Mammary epithelial cell (primary cell): ENCODE measurements at regions of chr14 and their contacts with region 1.

Region 1: GRCh38 chr14:72904840-72905561 is 11.1 kb upstream of the DPF3 start:
- DNase-seq: peak; percentile 66
- H3K4me3 ChIP-seq: no peak overlapping the region
- H3K27ac ChIP-seq: no peak overlapping the region
- H3K4me1 ChIP-seq: peaks cover 27% of the 10 kb centered on the region
- H3K27me3 ChIP-seq: no peaks in the 10 kb centered on the region
- CTCF ChIP-seq: peak; percentile 94 to 97

Region 2: GRCh38 chr14:72528059-72528862 is 376.7 kb before region 1 on chr14:
- CTCF ChIA-PET with region 1: interaction called, 12 read pairs
- dilution Hi-C with region 1: no loop called
- in situ Hi-C with region 1: no loop called
- intact Hi-C with region 1: no loop called
- DNase-seq: peak; percentile 24
- H3K4me3 ChIP-seq: no peak overlapping the region
- H3K27ac ChIP-seq: no peak overlapping the region
- H3K4me1 ChIP-seq: no peaks in the 10 kb centered on the region
- H3K27me3 ChIP-seq: no peaks in the 10 kb centered on the region
- CTCF ChIP-seq: no peak

Region 3: DNA sequence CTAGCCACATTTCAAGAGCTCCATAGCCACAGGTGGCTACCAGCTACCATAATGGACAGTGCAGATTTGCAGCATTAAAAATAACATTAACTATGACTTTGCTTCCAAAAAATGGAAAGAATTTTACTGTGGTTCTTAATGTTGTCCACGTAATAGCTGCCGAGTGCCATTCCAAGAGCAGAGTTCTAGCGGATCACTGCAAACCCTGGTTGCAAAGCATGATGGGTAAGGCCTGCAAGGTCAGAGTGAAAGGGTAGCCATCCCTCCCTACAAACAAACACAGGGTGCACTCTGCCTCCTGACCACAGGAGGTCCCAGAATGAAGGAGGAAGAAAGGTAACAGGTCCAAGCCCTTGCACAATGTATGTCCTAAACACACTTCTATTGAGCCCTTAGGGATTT is 168.7 kb before region 1 on chr14:
- CTCF ChIA-PET with region 1: no interaction called
- dilution Hi-C with region 1: no loop called
- in situ Hi-C with region 1: no loop called
- intact Hi-C with region 1: loop called (anchors 2 kb)
- DNase-seq: no peak
- H3K4me3 ChIP-seq: no peak overlapping the region
- H3K27ac ChIP-seq: no peak overlapping the region
- H3K4me1 ChIP-seq: no peaks in the 10 kb centered on the region
- H3K27me3 ChIP-seq: no peaks in the 10 kb centered on the region
- CTCF ChIP-seq: peak; percentile 20 to 28

Region 4: GRCh38 chr14:72948481-72949138 is 43.6 kb after region 1 on chr14:
- CTCF ChIA-PET with region 1: interaction called, 4 read pairs
- dilution Hi-C with region 1: no loop called
- in situ Hi-C with region 1: no loop called
- intact Hi-C with region 1: loop called (anchors 2 kb)
- DNase-seq: peak; percentile 41
- H3K4me3 ChIP-seq: no peak overlapping the region
- H3K27ac ChIP-seq: no peak overlapping the region
- H3K4me1 ChIP-seq: no peaks in the 10 kb centered on the region
- H3K27me3 ChIP-seq: no peaks in the 10 kb centered on the region
- CTCF ChIP-seq: peak; percentile 84 to 92

Region 5: DNA sequence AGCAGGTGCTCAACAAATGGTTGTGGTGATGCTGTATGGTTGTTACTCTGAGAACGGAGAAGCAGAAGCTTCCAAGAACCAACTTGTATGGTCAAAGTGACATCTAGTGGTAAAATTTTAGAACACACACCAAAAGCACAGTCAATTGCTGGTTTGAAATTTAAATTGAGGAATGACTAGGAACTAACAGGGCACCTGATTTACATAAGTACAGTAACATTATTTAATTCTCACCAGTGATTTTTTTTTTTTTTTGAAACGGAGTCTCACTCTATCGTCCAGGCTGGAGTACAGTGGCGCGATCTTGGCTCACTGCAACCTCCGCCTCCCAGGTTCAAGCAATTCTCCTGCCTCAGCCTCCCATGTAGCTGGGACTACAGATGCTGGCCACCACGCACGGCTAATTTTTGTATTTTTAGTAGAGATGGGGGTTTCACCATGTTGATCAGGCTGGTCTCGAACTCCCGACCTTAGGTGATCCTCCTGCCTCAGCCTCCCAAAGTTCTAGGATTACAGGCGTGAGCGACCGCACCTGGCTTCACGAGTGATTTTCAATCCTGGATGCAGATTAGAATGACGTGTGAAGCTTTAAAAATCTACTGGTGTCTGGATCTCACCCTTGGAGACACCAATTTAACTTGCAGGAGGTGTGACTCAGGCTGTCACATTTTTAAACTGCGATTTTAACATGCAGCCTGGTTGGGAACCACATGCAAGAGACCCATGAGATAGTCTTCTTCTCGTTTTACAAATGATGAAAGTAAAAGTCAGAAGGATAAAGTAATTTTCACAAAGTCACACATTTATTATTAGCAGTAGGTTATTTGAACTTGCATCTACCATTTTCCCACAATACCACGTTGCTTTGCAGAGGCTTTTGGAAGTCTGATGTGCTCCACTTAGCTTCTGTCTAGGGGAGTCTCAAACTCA is 567.4 kb after region 1 on chr14:
- CTCF ChIA-PET with region 1: no interaction called
- dilution Hi-C with region 1: no loop called
- in situ Hi-C with region 1: no loop called
- intact Hi-C with region 1: loop called (anchors 2 kb)
- DNase-seq: peak; percentile 54
- H3K4me3 ChIP-seq: no peak overlapping the region
- H3K27ac ChIP-seq: no peak overlapping the region
- H3K4me1 ChIP-seq: peaks cover 3% of the 10 kb centered on the region
- H3K27me3 ChIP-seq: no peaks in the 10 kb centered on the region
- CTCF ChIP-seq: peak; percentile 64 to 67